Activated T-helper 2 cell treated with anti-CD3 and anti-CD28 coated beads, Interferon-gamma antibody, Interleukin-2, Interleukin-4, amounts not matched to agents 10 μg/mL and 5 μg/mL and 100 μg/mL, durations not matched to agents 14 hours and 24 hours and 36 hours (primary cell): ENCODE measurements at regions of chr20 and their contacts with region 1.

Region 1: DNA sequence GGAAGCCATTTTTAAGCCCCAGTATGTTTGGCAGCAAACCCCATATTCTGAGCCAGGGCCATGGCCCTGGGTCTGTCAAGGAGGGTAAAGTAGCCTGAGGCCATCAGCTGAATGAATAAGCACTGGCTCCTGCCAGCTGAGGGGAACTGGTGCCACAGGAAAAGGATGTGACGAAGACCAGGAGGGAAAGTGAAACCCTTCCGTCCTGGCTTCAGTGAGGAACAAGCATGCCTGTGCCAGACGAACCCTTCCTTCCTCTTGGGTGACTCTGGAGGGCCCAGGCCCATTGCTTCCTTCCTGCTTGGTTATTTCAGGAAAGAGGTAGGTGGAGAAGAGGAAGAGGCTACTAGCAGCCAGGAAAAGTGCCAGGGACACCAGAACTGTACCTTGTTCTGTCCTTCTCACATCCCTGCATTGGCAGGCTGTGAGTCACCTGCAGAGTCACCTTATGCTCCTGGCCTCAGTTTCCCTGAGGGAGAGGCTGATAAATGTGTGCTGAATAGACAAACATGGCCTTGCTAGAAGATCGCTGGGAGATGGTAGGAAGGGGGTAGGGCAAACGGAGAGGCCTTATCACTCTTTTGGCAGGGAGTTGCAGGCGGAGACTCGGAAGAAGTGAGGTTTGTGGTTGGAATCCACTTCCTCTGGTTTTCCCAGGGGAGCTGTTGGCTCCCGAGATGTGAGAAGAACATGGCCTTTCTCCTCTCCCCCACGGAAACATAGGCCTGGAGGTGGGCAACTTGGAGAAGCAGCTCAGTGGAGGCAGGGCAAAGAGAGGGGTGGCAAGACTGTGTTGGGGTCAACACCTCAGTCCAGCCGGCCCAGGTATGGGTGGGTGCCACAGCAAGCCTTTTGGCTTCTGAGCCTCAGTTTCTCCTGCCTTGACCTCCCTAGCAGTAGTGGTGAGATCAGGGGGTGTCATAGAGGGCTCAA is 37.4 kb downstream of the COX4I2 start:
- DNase-seq: peak; percentile 62
- H3K4me3 Mint-ChIP-seq: peak overlapping the region; percentile 88
- H3K27ac Mint-ChIP-seq: peak overlapping the region; percentile 93
- H3K4me1 Mint-ChIP-seq: peaks cover 77% of the 10 kb centered on the region
- H3K27me3 Mint-ChIP-seq: no peaks in the 10 kb centered on the region

Region 2: DNA sequence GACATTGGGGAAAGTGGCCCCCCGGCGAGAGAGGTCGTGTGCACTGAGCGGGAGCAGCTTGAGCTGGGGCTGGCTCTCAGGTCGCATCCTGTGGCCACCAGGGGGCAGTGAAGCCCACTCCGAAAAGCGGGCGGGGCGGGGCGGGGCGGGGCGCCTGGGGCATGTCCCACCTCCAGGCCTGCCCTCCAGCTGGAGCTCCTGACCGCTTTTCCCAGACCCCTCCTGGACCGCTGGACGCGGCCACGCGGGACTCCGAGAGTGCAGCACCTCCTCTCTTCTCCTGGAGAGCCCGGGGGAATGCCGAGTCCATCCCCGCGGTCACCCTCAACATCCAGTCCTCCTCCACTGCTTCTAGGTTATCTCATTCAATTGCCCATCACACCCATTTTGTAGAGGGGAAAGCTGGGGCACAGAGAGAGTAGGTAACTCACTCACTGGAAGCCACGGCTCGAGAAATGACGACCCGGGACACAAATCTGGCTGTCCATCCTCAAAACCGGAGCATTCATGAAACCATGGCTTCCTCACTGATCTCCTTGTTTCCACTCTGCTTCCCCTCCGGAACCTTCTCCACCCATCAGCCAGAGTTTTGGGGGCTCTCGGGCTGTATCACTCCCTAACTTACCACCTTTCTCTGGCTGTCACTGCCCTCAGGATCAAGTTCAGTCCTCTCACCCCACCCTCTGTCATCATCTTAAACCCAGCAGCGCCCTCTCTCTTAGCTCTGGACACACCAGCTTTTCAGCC is 13.4 kb before region 1 on chr20:
- intact Hi-C with region 1: loop called (anchors 2 kb)
- DNase-seq: peak; percentile 61
- H3K4me3 Mint-ChIP-seq: peak overlapping the region; percentile 74
- H3K27ac Mint-ChIP-seq: peak overlapping the region; percentile 74
- H3K4me1 Mint-ChIP-seq: peaks cover 39% of the 10 kb centered on the region
- H3K27me3 Mint-ChIP-seq: no peaks in the 10 kb centered on the region

Region 3: GRCh38 chr20:31698803-31699718 is 23.9 kb after region 1 on chr20:
- intact Hi-C with region 1: loop called (anchors 1 kb)
- DNase-seq: no peak
- H3K4me3 Mint-ChIP-seq: peak overlapping the region; percentile 1
- H3K27ac Mint-ChIP-seq: peak overlapping the region; percentile 81
- H3K4me1 Mint-ChIP-seq: peaks cover 60% of the 10 kb centered on the region
- H3K27me3 Mint-ChIP-seq: no peaks in the 10 kb centered on the region

Region 4: DNA sequence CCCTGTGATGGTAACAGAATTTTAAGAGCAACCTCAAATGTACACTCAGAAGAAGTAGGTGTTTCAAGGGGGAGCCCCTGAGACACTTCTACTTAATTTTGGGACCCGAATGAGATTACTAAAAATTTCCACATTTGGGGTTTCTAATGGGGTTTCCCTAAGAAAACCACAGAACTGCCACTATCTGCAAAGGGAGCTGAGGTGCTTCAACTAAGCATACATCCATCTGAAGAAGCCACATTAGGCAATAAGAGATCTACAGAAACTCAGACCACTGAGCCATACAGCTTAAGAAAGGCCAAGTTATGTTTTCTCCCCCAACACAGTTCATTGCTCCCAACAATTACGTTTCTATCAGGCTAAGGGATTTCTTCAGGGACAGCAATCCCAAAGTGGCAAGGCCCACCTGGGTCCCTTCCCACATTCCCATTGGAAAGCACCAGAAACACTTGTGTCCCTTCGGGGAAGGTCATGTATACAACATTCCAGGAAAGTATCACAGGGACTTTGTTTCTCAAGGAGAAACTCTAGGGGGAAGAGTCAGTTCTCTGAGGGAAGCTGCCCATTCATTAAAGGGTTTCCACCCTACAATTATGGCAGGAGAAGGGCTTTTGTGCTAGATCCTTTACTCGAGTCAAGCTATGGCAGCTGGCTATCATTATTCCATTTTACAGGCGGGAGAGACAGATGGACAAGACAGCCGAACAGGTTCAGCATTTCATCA is 42.5 kb after region 1 on chr20:
- intact Hi-C with region 1: loop called (anchors 1 kb)
- DNase-seq: peak; percentile 22
- H3K4me3 Mint-ChIP-seq: peak overlapping the region; percentile 97
- H3K27ac Mint-ChIP-seq: peak overlapping the region; percentile 93
- H3K4me1 Mint-ChIP-seq: peaks cover 54% of the 10 kb centered on the region
- H3K27me3 Mint-ChIP-seq: no peaks in the 10 kb centered on the region

Region 5: DNA sequence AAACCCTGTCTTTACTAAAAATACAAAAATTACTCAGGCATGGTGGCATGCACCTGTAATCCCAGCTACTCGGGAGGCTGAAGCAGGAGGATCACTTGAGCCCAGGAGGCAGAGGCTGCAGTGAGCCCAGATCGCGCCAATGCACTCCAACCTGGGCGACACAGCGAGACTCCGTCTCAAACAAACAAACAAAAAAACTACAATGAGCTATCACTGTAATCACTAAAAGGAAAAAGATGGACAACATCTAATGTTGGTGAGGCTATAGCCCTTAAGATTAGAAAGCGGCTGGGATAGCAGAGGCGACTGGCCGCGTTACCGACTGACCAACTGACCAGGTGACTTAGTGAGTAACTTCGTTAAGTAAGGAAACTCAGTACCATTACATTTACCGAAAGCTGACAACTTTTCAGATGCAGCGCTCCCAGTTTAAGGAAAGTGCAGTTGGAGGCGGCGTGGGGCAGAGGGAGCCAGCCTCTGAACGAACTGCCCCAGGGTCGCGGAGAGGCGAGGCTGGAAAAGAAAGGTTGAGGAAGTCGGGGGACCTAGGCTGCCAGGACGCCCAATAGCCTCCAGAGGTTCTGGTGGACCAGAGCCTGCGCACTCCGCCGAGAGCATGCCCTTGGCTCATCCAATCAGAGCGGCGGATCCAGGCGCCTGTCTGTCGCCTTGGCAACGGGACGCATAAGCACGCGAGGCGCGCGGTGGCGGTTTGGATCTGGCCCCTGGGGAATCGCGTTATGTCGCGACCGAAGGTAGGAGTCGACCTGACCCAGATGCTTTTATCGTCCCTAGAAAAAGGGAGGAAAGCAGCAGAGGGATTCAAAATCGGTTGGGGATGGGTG is 204.2 kb after region 1 on chr20:
- intact Hi-C with region 1: no loop called
- DNase-seq: peak; percentile 75
- H3K4me3 Mint-ChIP-seq: peak overlapping the region; percentile 87
- H3K27ac Mint-ChIP-seq: peak overlapping the region; percentile 62
- H3K4me1 Mint-ChIP-seq: peaks cover 11% of the 10 kb centered on the region
- H3K27me3 Mint-ChIP-seq: peaks cover 36% of the 10 kb centered on the region